CD8-positive, alpha-beta T cell (primary cell): ENCODE measurements at regions of chr1 and their contacts with region 1.

Region 1: GRCh38 chr1:18581420-18581880 is 49.2 kb upstream of the PAX7 start:
- DNase-seq: peak in 4 of 9 experiments; percentile 25 to 31 (median 27)
- ATAC-seq: no peak
- H3K4me3 ChIP-seq: no peak overlapping the region
- H3K4me3 Mint-ChIP-seq: no peak overlapping the region
- H3K27ac ChIP-seq: no peak overlapping the region
- H3K27ac Mint-ChIP-seq: no peak overlapping the region
- H3K4me1 ChIP-seq: no peaks in the 10 kb centered on the region
- H3K4me1 Mint-ChIP-seq: no peaks in the 10 kb centered on the region
- H3K27me3 ChIP-seq: no peaks in the 10 kb centered on the region
- H3K27me3 Mint-ChIP-seq: peaks cover 24% of the 10 kb centered on the region
- CTCF ChIP-seq: peak; percentile 54

Region 2: DNA sequence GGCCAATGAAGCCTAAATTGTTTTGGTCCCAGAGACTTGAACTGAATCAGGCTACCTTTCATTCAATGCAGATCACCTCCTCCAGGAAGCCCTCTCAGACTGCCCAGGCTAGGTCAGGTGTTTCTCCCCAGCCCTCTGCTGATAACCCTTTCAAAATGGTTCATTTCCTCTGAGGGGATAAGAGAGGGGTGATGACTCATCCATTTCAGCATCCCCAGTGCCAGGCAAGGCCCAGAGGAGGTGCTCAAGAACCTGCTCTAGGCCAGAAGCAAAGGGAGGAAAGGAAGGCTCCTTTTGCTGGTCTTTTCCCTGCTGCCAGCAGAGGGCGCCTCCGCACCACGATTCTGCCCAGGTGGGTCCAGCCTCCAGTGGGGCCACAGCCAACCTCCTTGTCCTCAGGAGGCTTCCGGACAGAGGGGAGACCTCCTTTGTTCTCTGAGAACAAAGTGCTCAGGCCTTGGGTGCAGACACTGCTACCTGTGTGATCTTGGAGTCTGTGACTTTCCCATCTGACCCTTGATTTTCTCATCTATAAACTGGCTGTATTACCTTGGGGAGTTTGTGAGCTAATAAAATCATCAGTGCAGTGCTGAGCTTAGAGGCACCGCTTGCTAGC is 1087.2 kb before region 1 on chr1:
- CTCF ChIA-PET with region 1: no interaction called
- POLR2A ChIA-PET with region 1: no interaction called
- intact Hi-C with region 1: loop called in 1 of 2 experiments (anchors 2 kb)
- DNase-seq: peak; percentile 26 to 72 (median 59)
- ATAC-seq: peak; percentile 72
- H3K4me3 ChIP-seq: no peak overlapping the region
- H3K4me3 Mint-ChIP-seq: no peak overlapping the region
- H3K27ac ChIP-seq: no peak overlapping the region
- H3K27ac Mint-ChIP-seq: no peak overlapping the region
- H3K4me1 ChIP-seq: no peaks in the 10 kb centered on the region
- H3K4me1 Mint-ChIP-seq: no peaks in the 10 kb centered on the region
- H3K27me3 ChIP-seq: no peaks in the 10 kb centered on the region
- H3K27me3 Mint-ChIP-seq: peaks cover 9% of the 10 kb centered on the region
- CTCF ChIP-seq: peak; percentile 84